Naive thymus-derived CD4-positive, alpha-beta T cell (primary cell): ENCODE measurements at regions of chr1 and their contacts with region 1.

Region 1: GRCh38 chr1:32394141-32394889 is at the start of gene BSDC1:
- DNase-seq: peak; percentile 94 to 99 (median 98)
- ATAC-seq: peak; percentile 99
- H3K4me3 ChIP-seq: peak within 1 kb of the TSS; percentile 90
- H3K4me3 Mint-ChIP-seq: peak within 1 kb of the TSS in 9 of 10 donors; percentile 92 to 100 (median 99)
- H3K27ac ChIP-seq: peak within 1 kb of the TSS; percentile 95
- H3K27ac Mint-ChIP-seq: peak within 1 kb of the TSS; percentile 94 to 100 (median 98)
- H3K4me1 ChIP-seq: peaks cover 15 to 30% of the 10 kb centered on the region in 2 donors
- H3K4me1 Mint-ChIP-seq: peaks cover 4 to 40% (median 23%) of the 10 kb centered on the region in 7 donors
- H3K27me3 ChIP-seq: no peaks in the 10 kb centered on the region
- H3K27me3 Mint-ChIP-seq: peaks cover 0 to 19% (median 0%) of the 10 kb centered on the region in 5 donors
- total RNA-seq, gene BSDC1: 51.7 to 186 (median 121) TPM

Region 2: GRCh38 chr1:31065310-31066217 is 1328.8 kb before region 1 on chr1 and contains the start of gene PUM1:
- CTCF ChIA-PET with region 1: no interaction called
- POLR2A ChIA-PET with region 1: no interaction called
- intact Hi-C with region 1: loop called in 1 of 2 experiments (anchors 1 kb)
- DNase-seq: peak; percentile 95 to 99 (median 97)
- ATAC-seq: peak; percentile 99
- H3K4me3 ChIP-seq: peak within 1 kb of the TSS; percentile 97
- H3K4me3 Mint-ChIP-seq: peak within 1 kb of the TSS; percentile 96 to 100 (median 98)
- H3K27ac ChIP-seq: peak within 1 kb of the TSS; percentile 95
- H3K27ac Mint-ChIP-seq: peak within 1 kb of the TSS; percentile 97 to 99 (median 98)
- H3K4me1 ChIP-seq: peaks cover 10 to 18% of the 10 kb centered on the region in 2 donors
- H3K4me1 Mint-ChIP-seq: peaks cover 20 to 38% (median 29%) of the 10 kb centered on the region in 7 donors
- H3K27me3 ChIP-seq: no peaks in the 10 kb centered on the region
- H3K27me3 Mint-ChIP-seq: no peaks in the 10 kb centered on the region
- total RNA-seq, gene PUM1: 114 to 226 (median 174) TPM

Region 3: DNA sequence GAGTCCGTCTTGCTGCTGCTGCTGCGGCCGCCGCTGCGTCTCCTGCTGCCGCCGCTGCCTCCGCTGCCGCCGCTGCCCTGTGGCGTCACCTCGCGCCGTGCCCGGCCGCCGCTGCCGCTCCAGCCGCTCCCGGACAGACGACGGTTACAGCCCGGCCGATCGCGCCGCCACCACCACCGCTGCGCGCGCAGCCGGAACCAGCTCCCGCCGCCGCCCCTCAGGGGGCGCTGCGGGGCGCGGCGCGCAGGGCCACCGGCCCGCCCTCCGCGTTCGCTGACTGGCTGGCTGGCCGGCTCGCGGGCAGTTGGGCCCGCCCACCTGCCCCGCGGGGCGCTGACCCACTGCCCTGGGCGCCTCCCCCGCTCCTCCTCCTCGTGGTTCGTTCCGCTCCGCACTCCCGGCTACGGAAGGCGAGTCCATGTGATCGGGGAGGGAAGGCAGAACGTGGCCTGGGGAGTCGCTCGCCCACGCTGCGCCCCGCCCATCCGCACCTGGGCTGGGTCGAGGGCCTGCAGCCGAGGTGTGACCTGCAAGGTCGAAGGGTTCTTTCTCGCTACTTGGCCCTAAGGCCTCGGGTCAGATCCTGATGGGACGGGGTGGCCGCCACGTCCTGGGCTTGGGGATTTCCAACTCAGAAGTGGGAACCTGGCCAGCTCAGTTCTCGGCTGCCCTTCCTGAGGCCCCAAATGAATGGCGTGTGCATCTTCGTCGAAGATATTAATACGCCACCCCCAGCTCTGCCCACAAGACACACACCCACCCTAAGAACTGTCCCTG is 456.0 kb before region 1 on chr1 and contains the start of gene PTP4A2:
- CTCF ChIA-PET with region 1: no interaction called
- POLR2A ChIA-PET with region 1: interaction called, 5 read pairs
- intact Hi-C with region 1: loop called in 1 of 2 experiments (anchors 5 kb)
- DNase-seq: peak; percentile 65 to 93 (median 81)
- ATAC-seq: peak; percentile 84
- H3K4me3 ChIP-seq: peak within 1 kb of the TSS; percentile 81
- H3K4me3 Mint-ChIP-seq: peak within 1 kb of the TSS; percentile 92 to 100 (median 96)
- H3K27ac ChIP-seq: peak within 1 kb of the TSS; percentile 81
- H3K27ac Mint-ChIP-seq: peak within 1 kb of the TSS; percentile 90 to 99 (median 95)
- H3K4me1 ChIP-seq: peaks cover 66 to 67% of the 10 kb centered on the region in 2 donors
- H3K4me1 Mint-ChIP-seq: peaks cover 54 to 82% (median 73%) of the 10 kb centered on the region in 7 donors
- H3K27me3 ChIP-seq: no peaks in the 10 kb centered on the region
- H3K27me3 Mint-ChIP-seq: no peaks in the 10 kb centered on the region
- total RNA-seq, gene PTP4A2: 196 to 449 (median 271) TPM

Region 4: GRCh38 chr1:32107742-32108661 is 286.3 kb before region 1 on chr1 and contains the start of gene KPNA6:
- CTCF ChIA-PET with region 1: no interaction called
- POLR2A ChIA-PET with region 1: interaction called, 7 read pairs
- intact Hi-C with region 1: loop called (anchors 1 kb)
- DNase-seq: peak; percentile 75 to 95 (median 93)
- ATAC-seq: peak; percentile 94
- H3K4me3 ChIP-seq: peak within 1 kb of the TSS; percentile 75
- H3K4me3 Mint-ChIP-seq: peak within 1 kb of the TSS; percentile 95 to 100 (median 99)
- H3K27ac ChIP-seq: peak within 1 kb of the TSS; percentile 94
- H3K27ac Mint-ChIP-seq: peak within 1 kb of the TSS; percentile 93 to 99 (median 98)
- H3K4me1 ChIP-seq: peaks cover 37 to 40% of the 10 kb centered on the region in 2 donors
- H3K4me1 Mint-ChIP-seq: peaks cover 27 to 63% (median 47%) of the 10 kb centered on the region in 7 donors
- H3K27me3 ChIP-seq: no peaks in the 10 kb centered on the region
- H3K27me3 Mint-ChIP-seq: no peaks in the 10 kb centered on the region
- total RNA-seq, gene KPNA6: 47.4 to 63.7 (median 51.6) TPM

Region 5: GRCh38 chr1:32215629-32216480 is 178.5 kb before region 1 on chr1:
- CTCF ChIA-PET with region 1: interaction called, 7 read pairs
- POLR2A ChIA-PET with region 1: interaction called, 10 read pairs
- intact Hi-C with region 1: no loop called
- DNase-seq: peak in 8 of 9 donors; percentile 29 to 63 (median 52)
- ATAC-seq: peak; percentile 92
- H3K4me3 ChIP-seq: no peak overlapping the region
- H3K4me3 Mint-ChIP-seq: peak overlapping the region in 6 of 10 donors; percentile 7 to 43 (median 32)
- H3K27ac ChIP-seq: peak overlapping the region; percentile 59
- H3K27ac Mint-ChIP-seq: peak overlapping the region; percentile 25 to 86 (median 63)
- H3K4me1 ChIP-seq: peaks cover under 1 to 12% of the 10 kb centered on the region in 2 donors
- H3K4me1 Mint-ChIP-seq: peaks cover 12 to 31% (median 24%) of the 10 kb centered on the region in 7 donors
- H3K27me3 ChIP-seq: no peaks in the 10 kb centered on the region
- H3K27me3 Mint-ChIP-seq: no peaks in the 10 kb centered on the region

Region 6: GRCh38 chr1:32291708-32292492 is 102.4 kb before region 1 on chr1 and contains the start of gene HDAC1:
- CTCF ChIA-PET with region 1: no interaction called
- POLR2A ChIA-PET with region 1: interaction called, 7 read pairs
- intact Hi-C with region 1: loop called (anchors 1 kb)
- DNase-seq: peak; percentile 91 to 97 (median 94)
- ATAC-seq: peak; percentile 98
- H3K4me3 ChIP-seq: peak within 1 kb of the TSS; percentile 92
- H3K4me3 Mint-ChIP-seq: peak within 1 kb of the TSS; percentile 94 to 100 (median 98)
- H3K27ac ChIP-seq: peak within 1 kb of the TSS; percentile 88
- H3K27ac Mint-ChIP-seq: peak within 1 kb of the TSS; percentile 94 to 99 (median 98)
- H3K4me1 ChIP-seq: peaks cover 38 to 46% of the 10 kb centered on the region in 2 donors
- H3K4me1 Mint-ChIP-seq: peaks cover 37 to 67% (median 48%) of the 10 kb centered on the region in 7 donors
- H3K27me3 ChIP-seq: no peaks in the 10 kb centered on the region
- H3K27me3 Mint-ChIP-seq: no peaks in the 10 kb centered on the region
- total RNA-seq, gene HDAC1: 81.8 to 205 (median 174) TPM

Region 7: DNA sequence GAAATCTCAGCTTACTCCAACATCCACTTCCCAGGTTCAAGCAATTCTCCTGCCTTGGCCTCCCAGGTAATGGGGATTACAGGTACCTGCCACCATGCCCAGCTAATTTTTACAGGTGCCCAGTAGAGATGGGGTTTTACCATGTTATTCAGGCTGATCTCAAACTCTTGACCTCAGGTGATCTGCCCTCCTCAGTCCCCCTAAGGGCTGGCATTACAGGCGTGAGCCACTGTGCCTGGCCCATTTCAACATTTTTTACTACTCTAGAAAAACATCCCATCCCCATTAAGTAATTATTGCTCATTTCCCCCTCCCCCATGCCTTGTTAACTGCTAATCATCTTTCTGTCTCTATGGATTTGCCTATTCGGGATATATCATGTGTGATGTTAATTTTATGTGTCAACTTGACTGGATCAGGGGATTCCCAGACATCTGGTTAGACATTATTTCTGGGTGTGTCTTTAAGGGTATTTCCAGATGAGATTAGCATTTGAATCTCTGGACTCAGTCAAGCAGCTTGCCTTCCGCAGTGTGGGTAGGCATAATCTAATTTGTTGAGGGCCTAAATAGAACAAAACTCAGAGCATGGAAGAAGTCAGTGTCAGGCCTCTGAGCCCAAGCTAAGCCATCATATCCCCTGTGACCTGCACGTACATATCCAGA is 37.6 kb after region 1 on chr1:
- CTCF ChIA-PET with region 1: no interaction called
- POLR2A ChIA-PET with region 1: no interaction called
- intact Hi-C with region 1: no loop called
- DNase-seq: no peak
- ATAC-seq: no peak
- H3K4me3 ChIP-seq: no peak overlapping the region
- H3K4me3 Mint-ChIP-seq: no peak overlapping the region
- H3K27ac ChIP-seq: no peak overlapping the region
- H3K27ac Mint-ChIP-seq: peak overlapping the region in 1 of 9 donors; percentile 12
- H3K4me1 ChIP-seq: no peaks in the 10 kb centered on the region
- H3K4me1 Mint-ChIP-seq: no peaks in the 10 kb centered on the region
- H3K27me3 ChIP-seq: no peaks in the 10 kb centered on the region
- H3K27me3 Mint-ChIP-seq: peaks cover 26 to 61% (median 41%) of the 10 kb centered on the region in 5 donors

Region 8: GRCh38 chr1:32817159-32817814 is 423.0 kb after region 1 on chr1 and contains the starts of genes S100PBP and YARS1:
- CTCF ChIA-PET with region 1: interaction called, 4 read pairs
- POLR2A ChIA-PET with region 1: no interaction called
- intact Hi-C with region 1: loop called (anchors 1 to 5 kb)
- DNase-seq: peak; percentile 98 to 100 (median 99)
- ATAC-seq: peak; percentile 99
- H3K4me3 ChIP-seq: peak within 1 kb of the TSS; percentile 86
- H3K4me3 Mint-ChIP-seq: peak within 1 kb of the TSS; percentile 85 to 99 (median 96)
- H3K27ac ChIP-seq: peak within 1 kb of the TSS; percentile 85
- H3K27ac Mint-ChIP-seq: peak within 1 kb of the TSS; percentile 82 to 96 (median 92)
- H3K4me1 ChIP-seq: peaks cover 26 to 36% of the 10 kb centered on the region in 2 donors
- H3K4me1 Mint-ChIP-seq: peaks cover 35 to 72% (median 59%) of the 10 kb centered on the region in 7 donors
- H3K27me3 ChIP-seq: no peaks in the 10 kb centered on the region
- H3K27me3 Mint-ChIP-seq: no peaks in the 10 kb centered on the region
- total RNA-seq, gene S100PBP: 36.3 to 69.0 (median 60.2) TPM
- total RNA-seq, gene YARS1: 70.2 to 175 (median 86.8) TPM

Region 9: DNA sequence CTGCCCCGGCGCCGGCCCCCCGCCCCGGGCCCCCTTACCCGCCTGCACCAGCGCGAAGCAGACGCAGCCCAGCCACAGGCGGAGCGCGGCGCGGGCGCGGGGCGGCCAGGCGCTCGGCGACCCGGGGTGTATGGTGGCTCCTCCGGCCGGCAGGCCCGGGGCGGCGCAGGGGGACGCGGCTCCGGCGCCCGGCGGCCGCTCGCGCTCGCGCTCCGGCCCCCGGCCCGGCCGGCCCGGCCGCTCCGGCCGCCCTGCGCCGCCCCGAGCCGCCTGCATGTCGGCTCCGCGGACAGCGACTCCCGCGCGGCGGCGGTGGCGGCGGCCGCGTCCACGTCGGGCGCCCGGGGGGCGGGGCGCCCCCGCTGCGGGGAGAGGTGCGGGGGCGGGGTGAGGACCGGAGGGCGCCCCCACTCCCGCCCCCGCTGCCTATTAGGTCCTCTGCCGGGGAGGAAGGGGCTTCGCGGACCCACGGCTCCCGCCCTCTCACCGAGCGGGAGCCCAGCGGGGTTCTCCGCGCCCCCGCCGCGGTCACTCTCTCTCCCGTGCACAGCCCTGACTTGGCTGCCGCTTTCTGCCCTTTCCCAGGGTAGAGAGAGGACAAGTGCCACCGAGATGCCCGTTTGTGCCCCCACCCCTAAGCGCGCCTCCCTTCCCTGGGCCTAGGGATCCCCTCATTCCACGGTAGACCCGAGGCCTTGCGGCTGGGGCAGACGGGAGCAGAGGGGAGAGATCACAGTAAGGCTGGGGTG is 476.5 kb after region 1 on chr1 and contains the start of gene FNDC5:
- CTCF ChIA-PET with region 1: no interaction called
- POLR2A ChIA-PET with region 1: no interaction called
- intact Hi-C with region 1: no loop called
- DNase-seq: no peak
- ATAC-seq: peak; percentile 14
- H3K4me3 ChIP-seq: no peak within 1 kb of the TSS
- H3K4me3 Mint-ChIP-seq: peak within 1 kb of the TSS; percentile 51 to 83 (median 68)
- H3K27ac ChIP-seq: no peak within 1 kb of the TSS
- H3K27ac Mint-ChIP-seq: no peak within 1 kb of the TSS
- H3K4me1 ChIP-seq: peaks cover 0 to 11% of the 10 kb centered on the region in 2 donors
- H3K4me1 Mint-ChIP-seq: peaks cover 11 to 28% (median 17%) of the 10 kb centered on the region in 7 donors
- H3K27me3 ChIP-seq: peaks cover 3 to 15% of the 10 kb centered on the region in 2 donors
- H3K27me3 Mint-ChIP-seq: peaks cover 44 to 60% (median 53%) of the 10 kb centered on the region in 5 donors
- total RNA-seq, gene FNDC5: not detected